CD4-positive, alpha-beta memory T cell (primary cell): ENCODE measurements at regions of chr1 and their contacts with region 1.

Region 1: DNA sequence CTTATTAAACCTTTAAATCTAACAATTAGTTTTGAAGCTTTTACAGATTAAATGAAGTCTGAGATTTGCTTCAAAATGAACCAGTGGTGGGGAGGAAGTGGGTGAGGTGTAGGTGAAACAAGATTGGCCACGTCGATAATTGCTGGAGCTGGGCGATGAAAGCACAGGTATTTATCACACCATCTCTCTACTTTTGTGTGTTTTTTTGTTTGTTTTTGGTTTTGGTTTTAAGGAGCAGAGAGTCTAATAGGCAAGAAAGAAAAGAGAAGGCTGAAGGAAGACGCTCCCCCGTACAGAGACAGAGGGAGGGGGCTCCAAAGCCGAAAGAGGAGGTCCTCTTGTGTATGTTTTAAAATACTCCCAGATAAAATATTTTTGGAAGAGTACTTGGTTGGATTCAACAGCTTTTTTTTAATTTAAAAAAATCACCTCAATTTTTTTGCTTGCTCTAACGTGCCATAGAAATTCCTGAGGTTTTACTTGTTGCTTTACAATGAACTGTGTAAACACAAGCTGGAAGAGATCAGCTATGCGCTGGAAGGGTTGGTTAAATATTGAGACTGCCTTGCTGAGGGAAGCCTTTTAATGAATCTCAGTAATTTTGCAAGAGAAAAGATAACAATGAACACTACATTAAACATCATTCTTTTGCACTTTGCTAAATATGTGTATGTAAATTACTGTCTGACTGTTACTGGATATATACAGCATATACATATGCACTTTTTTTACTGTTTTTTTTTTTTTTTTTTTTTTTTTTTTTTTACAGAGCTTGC is 6.7 kb upstream of the LGALS8 start:
- DNase-seq: peak; percentile 63 to 79 (median 78)
- H3K4me3 ChIP-seq: peak overlapping the region in 1 of 2 donors; percentile 40
- H3K4me3 Mint-ChIP-seq: peak overlapping the region; percentile 70 to 90 (median 84)
- H3K27ac ChIP-seq: peak overlapping the region; percentile 45
- H3K27ac Mint-ChIP-seq: peak overlapping the region; percentile 79 to 95 (median 90)
- H3K4me1 ChIP-seq: peaks cover 40% of the 10 kb centered on the region
- H3K4me1 Mint-ChIP-seq: peaks cover 33 to 60% (median 37%) of the 10 kb centered on the region in 4 donors
- H3K27me3 ChIP-seq: no peaks in the 10 kb centered on the region
- H3K27me3 Mint-ChIP-seq: no peaks in the 10 kb centered on the region

Region 2: DNA sequence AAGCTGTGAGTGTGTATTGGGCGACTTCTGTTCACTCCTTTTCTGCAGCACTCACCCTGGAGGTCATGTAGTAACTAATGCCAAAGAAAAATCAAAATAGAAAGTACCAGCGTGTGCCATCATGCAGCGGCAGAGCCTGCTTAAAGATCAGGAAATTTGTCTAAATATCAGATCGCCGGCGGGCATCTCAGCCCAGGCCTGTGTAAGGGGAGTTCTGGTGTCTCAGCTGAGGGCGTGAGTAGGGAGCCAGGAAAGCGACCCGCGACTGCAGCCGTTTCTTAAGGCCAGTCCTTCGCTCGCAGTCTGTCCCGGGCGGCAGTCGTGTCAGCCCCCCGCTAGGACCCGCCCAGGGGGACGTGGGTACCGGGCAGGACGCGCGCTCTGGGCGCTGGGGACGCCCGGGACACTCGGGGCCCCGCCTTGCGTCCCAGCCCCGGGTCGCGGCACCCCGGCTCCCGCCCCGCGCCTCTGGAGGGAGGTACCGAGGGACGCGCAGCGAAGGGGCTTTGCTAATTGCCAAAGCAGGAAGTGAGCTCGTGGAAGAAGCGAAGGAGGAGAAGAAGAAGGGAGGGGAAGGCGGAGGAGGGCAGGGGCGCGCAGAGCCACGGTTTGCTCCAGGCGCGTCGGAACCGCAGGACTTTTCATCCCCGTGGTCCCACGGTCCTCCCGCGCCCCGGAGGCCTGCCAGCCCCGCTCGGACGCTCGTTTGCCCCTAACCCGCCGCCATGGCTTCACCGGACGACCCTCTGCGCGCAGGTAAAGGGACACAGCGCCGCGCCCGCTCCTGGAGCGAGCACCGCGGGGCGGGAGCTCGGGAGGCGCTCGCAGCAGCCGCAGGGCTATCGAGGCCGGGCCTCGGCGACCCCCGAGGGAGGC is 122.0 kb before region 1 on chr1:
- CTCF ChIA-PET with region 1: interaction called, 3 read pairs
- POLR2A ChIA-PET with region 1: interaction called, 5 read pairs
- intact Hi-C with region 1: loop called (anchors 5 kb)
- DNase-seq: peak; percentile 56 to 68 (median 60)
- H3K4me3 ChIP-seq: peak overlapping the region; percentile 47 to 71
- H3K4me3 Mint-ChIP-seq: peak overlapping the region; percentile 89 to 96 (median 93)
- H3K27ac ChIP-seq: peak overlapping the region; percentile 67
- H3K27ac Mint-ChIP-seq: peak overlapping the region; percentile 68 to 95 (median 86)
- H3K4me1 ChIP-seq: peaks cover 20% of the 10 kb centered on the region
- H3K4me1 Mint-ChIP-seq: peaks cover 19 to 51% (median 34%) of the 10 kb centered on the region in 4 donors
- H3K27me3 ChIP-seq: no peaks in the 10 kb centered on the region
- H3K27me3 Mint-ChIP-seq: peaks cover 4 to 17% of the 10 kb centered on the region in 2 donors

Region 3: GRCh38 chr1:236489710-236490377 is 27.3 kb before region 1 on chr1:
- CTCF ChIA-PET with region 1: interaction called, 16 read pairs
- POLR2A ChIA-PET with region 1: interaction called, 9 read pairs
- intact Hi-C with region 1: no loop called
- DNase-seq: peak in 4 of 5 donors; percentile 43 to 50 (median 44)
- H3K4me3 ChIP-seq: no peak overlapping the region
- H3K4me3 Mint-ChIP-seq: no peak overlapping the region
- H3K27ac ChIP-seq: no peak overlapping the region
- H3K27ac Mint-ChIP-seq: no peak overlapping the region
- H3K4me1 ChIP-seq: no peaks in the 10 kb centered on the region
- H3K4me1 Mint-ChIP-seq: peaks cover 13 to 22% (median 16%) of the 10 kb centered on the region in 4 donors
- H3K27me3 ChIP-seq: no peaks in the 10 kb centered on the region
- H3K27me3 Mint-ChIP-seq: peaks cover 2 to 3% of the 10 kb centered on the region in 2 donors

Region 4: DNA sequence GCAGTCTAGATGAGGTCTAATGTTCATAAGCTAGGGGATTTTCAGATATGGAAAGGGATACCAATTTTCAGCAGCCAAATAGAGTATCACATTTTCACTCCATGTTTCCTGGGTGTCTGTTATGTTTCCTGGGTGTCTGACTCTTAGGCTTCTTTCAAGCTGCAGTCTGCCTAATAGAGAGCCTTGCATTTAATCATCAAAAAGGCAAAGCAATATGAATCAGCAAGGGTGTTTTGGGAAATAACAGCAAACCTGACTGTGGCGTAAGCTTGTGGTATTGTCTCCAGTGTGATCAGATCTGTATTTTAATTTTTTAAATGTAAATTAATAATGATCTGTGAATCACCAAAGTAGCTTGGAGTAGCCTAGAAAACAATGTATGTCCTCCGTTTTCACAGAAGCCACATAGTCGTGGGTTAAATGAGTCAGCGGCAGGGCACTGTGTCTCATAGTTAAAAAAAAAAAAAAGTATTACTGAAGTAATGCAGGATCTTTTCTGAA is 17.1 kb after region 1 on chr1:
- CTCF ChIA-PET with region 1: interaction called, 8 read pairs
- POLR2A ChIA-PET with region 1: interaction called, 82 read pairs
- intact Hi-C with region 1: loop called (anchors 2 kb)
- DNase-seq: peak in 2 of 5 donors; percentile 16 to 74
- H3K4me3 ChIP-seq: no peak overlapping the region
- H3K4me3 Mint-ChIP-seq: peak overlapping the region in 6 of 8 donors; percentile 12 to 82 (median 30)
- H3K27ac ChIP-seq: peak overlapping the region; percentile 32
- H3K27ac Mint-ChIP-seq: peak overlapping the region; percentile 62 to 95 (median 81)
- H3K4me1 ChIP-seq: peaks cover 44% of the 10 kb centered on the region
- H3K4me1 Mint-ChIP-seq: peaks cover 28 to 62% (median 46%) of the 10 kb centered on the region in 4 donors
- H3K27me3 ChIP-seq: no peaks in the 10 kb centered on the region
- H3K27me3 Mint-ChIP-seq: no peaks in the 10 kb centered on the region

Region 5: GRCh38 chr1:236868625-236869467 is 351.7 kb after region 1 on chr1:
- CTCF ChIA-PET with region 1: no interaction called
- POLR2A ChIA-PET with region 1: no interaction called
- intact Hi-C with region 1: no loop called
- DNase-seq: peak in 4 of 5 donors; percentile 32 to 41 (median 35)
- H3K4me3 ChIP-seq: no peak overlapping the region
- H3K4me3 Mint-ChIP-seq: no peak overlapping the region
- H3K27ac ChIP-seq: no peak overlapping the region
- H3K27ac Mint-ChIP-seq: peak overlapping the region in 2 of 7 donors; percentile 17 to 65
- H3K4me1 ChIP-seq: no peaks in the 10 kb centered on the region
- H3K4me1 Mint-ChIP-seq: peaks cover 0 to 4% (median 0%) of the 10 kb centered on the region in 4 donors
- H3K27me3 ChIP-seq: no peaks in the 10 kb centered on the region
- H3K27me3 Mint-ChIP-seq: no peaks in the 10 kb centered on the region